MCF 10A (cell line): ENCODE measurements at regions of chr6 and their contacts with region 1.

Region 1: DNA sequence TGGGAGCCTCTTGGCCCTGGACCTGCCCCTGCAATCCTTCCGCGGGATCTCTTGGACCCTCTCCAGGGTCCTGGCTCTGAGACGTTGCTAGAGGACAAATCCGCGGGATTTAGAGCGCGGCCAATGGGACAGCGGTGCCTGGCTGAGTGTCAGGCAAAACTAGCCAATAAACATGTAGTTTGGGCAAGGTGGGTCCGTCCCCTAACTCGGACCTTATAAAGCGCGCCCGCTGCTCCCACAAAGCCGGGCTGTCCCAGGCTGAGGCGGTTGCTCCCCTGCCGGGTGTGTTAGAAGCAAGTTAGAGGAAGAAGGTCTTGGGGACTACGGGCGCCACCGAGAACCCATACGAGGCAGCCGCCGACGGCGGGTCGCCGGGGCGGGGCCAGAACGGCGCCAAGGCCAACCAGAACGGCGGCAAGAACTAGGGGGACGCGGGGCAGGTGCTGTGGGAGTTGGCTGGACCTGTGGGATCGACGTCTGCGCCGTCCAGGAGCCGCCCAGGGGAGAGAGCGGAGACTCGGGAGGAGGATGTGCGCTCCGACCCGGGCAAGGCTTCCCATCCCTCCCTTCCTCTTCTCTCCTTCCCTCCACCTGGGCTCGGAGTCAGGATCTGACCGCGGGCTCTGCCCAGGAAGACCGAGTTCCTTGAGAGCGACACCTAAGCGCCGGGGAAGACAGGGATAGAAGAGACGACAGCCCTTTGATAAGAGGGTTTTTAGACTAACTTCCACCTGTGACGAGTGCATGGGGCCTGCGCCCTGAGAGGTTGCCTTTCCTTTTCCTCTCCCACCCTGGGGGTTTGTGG is 6.5 kb upstream of the TMEM14A start:
- DNase-seq: peak; percentile 94
- H3K4me3 Mint-ChIP-seq: no peak overlapping the region
- H3K27ac Mint-ChIP-seq: no peak overlapping the region
- H3K4me1 Mint-ChIP-seq: no peaks in the 10 kb centered on the region
- H3K27me3 Mint-ChIP-seq: no peaks in the 10 kb centered on the region
- CTCF ChIP-seq: no peak

Region 2: GRCh38 chr6:52284460-52285176 is 379.8 kb before region 1 on chr6 and contains the start of gene MCM3:
- CTCF ChIA-PET with region 1: interaction called, 6 read pairs
- POLR2A ChIA-PET with region 1: no interaction called
- intact Hi-C with region 1: loop called (anchors 2 kb)
- DNase-seq: peak; percentile 99
- H3K4me3 Mint-ChIP-seq: no peak within 1 kb of the TSS
- H3K27ac Mint-ChIP-seq: peak within 1 kb of the TSS; percentile 43
- H3K4me1 Mint-ChIP-seq: peaks cover 12% of the 10 kb centered on the region
- H3K27me3 Mint-ChIP-seq: no peaks in the 10 kb centered on the region
- CTCF ChIP-seq: no peak
- total RNA-seq, gene MCM3: 16.3 and 24.9 TPM in 2 replicates

Region 3: DNA sequence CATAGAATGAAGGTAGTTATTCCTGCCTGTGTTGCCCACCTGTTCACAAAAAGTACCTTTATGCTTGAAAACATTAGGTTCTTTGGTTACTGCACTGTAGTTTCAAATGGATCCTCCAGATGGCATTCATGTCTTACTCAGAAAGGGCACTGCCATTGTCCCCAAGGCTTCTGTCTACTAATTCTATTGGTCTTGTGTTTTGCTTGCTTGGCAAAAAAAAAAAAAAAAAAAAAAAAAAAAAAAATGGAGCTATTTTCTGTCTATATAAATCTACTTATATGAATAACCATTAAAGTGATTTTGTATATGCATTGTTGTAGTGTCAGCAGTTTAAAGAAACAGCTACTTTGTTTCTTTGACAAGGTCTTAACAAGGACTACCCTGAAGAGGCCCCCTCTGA is 256.9 kb before region 1 on chr6:
- CTCF ChIA-PET with region 1: interaction called, 44 read pairs
- POLR2A ChIA-PET with region 1: interaction called, 3 read pairs
- intact Hi-C with region 1: loop called (anchors 1 kb)
- DNase-seq: peak; percentile 60
- H3K4me3 Mint-ChIP-seq: no peak overlapping the region
- H3K27ac Mint-ChIP-seq: no peak overlapping the region
- H3K4me1 Mint-ChIP-seq: peaks cover 15% of the 10 kb centered on the region
- H3K27me3 Mint-ChIP-seq: no peaks in the 10 kb centered on the region
- CTCF ChIP-seq: peak; percentile 51

Region 4: GRCh38 chr6:52577022-52577777 is 87.2 kb before region 1 on chr6 and contains the start of gene TRAM2:
- CTCF ChIA-PET with region 1: interaction called, 3 read pairs
- POLR2A ChIA-PET with region 1: no interaction called
- intact Hi-C with region 1: loop called (anchors 2 kb)
- DNase-seq: peak; percentile 73
- H3K4me3 Mint-ChIP-seq: peak within 1 kb of the TSS; percentile 69
- H3K27ac Mint-ChIP-seq: peak within 1 kb of the TSS; percentile 85
- H3K4me1 Mint-ChIP-seq: peaks cover 31% of the 10 kb centered on the region
- H3K27me3 Mint-ChIP-seq: no peaks in the 10 kb centered on the region
- CTCF ChIP-seq: peak; percentile 26
- total RNA-seq, gene TRAM2: 9.9 and 10.1 TPM in 2 replicates

Region 5: DNA sequence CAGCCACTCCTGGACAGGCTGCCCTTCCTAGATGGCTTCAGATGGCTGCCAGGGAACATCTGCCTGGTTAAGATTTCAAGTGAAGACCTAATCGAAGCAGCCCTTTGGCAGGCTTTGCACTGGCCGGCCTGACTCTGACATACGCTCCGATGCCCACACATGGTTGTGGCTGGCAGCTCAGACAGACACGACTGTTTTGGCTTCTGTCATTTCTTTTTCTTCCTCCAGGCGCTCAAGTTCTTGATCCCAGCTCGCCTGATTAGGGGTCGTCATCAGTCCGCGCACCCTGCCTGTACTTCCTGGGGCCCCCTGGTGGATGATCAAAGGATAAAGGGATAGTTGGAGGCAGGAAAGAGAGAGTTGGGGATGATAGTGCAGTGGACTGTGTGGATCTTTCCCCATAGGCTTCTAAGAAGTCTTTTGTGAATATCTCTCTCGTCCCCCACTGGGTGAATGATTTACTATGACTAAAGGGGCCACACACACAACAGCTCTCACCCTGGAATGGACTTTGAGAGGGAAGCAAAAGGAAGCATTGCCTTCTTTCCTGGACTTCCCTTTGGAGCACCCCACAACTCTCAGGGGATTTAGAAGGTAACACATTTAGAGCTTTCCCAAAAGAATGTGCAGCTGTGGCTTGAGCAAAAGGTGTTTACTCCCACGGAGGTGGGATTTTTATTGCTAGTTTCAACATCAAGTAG is 66.1 kb before region 1 on chr6:
- CTCF ChIA-PET with region 1: interaction called, 4 read pairs
- POLR2A ChIA-PET with region 1: no interaction called
- intact Hi-C with region 1: loop called (anchors 5 kb)
- DNase-seq: peak; percentile 52
- H3K4me3 Mint-ChIP-seq: no peak overlapping the region
- H3K27ac Mint-ChIP-seq: no peak overlapping the region
- H3K4me1 Mint-ChIP-seq: peaks cover 22% of the 10 kb centered on the region
- H3K27me3 Mint-ChIP-seq: no peaks in the 10 kb centered on the region
- CTCF ChIP-seq: peak; percentile 39

Region 6: DNA sequence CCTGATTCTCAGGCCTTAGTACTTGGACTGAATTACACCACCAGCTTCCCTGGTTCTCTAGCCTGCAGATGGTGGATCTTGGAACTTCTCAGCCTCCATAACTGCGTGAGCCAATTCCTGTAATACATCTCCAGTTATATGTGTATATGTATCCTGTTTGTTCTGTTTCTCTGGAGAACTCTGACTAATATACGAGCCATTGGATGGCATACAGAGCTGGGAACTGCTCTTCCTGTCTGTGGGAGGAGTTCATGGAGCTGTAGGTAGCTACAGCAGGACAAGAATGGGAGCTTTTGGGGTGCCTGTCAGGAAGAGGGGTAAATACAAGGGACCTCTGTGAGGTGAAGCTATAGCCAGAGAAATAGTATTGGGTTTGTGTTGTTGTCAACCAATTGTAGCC is 47.7 kb after region 1 on chr6:
- CTCF ChIA-PET with region 1: no interaction called
- POLR2A ChIA-PET with region 1: no interaction called
- intact Hi-C with region 1: no loop called
- DNase-seq: no peak
- H3K4me3 Mint-ChIP-seq: no peak overlapping the region
- H3K27ac Mint-ChIP-seq: no peak overlapping the region
- H3K4me1 Mint-ChIP-seq: no peaks in the 10 kb centered on the region
- H3K27me3 Mint-ChIP-seq: no peaks in the 10 kb centered on the region
- CTCF ChIP-seq: no peak